MCF 10A (cell line): ENCODE measurements at regions of chr1 and their contacts with region 1.

Region 1: GRCh38 chr1:186738926-186739325 is 58.7 kb upstream of the PTGS2 start:
- DNase-seq: no peak
- H3K4me3 Mint-ChIP-seq: no peak overlapping the region
- H3K27ac Mint-ChIP-seq: no peak overlapping the region
- H3K4me1 Mint-ChIP-seq: peaks cover 7% of the 10 kb centered on the region
- H3K27me3 Mint-ChIP-seq: no peaks in the 10 kb centered on the region
- CTCF ChIP-seq: no peak

Region 2: DNA sequence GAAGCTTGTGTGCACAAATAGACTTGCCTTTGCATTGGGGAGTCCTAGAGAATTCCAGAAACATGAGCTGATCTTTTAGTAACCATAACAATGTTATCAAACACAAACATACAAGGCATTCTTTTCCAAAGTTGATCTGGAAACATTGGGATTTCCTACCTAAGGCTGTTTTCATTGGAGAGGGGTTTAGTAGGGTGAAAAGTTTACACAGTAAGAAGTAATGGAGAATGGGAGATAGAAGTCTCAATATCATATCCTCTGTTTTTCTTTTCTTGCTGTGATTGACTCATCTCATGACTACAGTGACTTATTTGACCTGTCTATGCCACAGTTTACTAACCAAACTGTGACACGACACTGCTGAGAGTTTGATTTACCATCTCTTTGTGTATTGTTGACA is 24.2 kb after region 1 on chr1:
- CTCF ChIA-PET with region 1: no interaction called
- POLR2A ChIA-PET with region 1: no interaction called
- intact Hi-C with region 1: no loop called
- DNase-seq: no peak
- H3K4me3 Mint-ChIP-seq: no peak overlapping the region
- H3K27ac Mint-ChIP-seq: no peak overlapping the region
- H3K4me1 Mint-ChIP-seq: no peaks in the 10 kb centered on the region
- H3K27me3 Mint-ChIP-seq: no peaks in the 10 kb centered on the region
- CTCF ChIP-seq: no peak

Region 3: GRCh38 chr1:186781730-186782129 is 42.8 kb after region 1 on chr1:
- CTCF ChIA-PET with region 1: no interaction called
- POLR2A ChIA-PET with region 1: no interaction called
- intact Hi-C with region 1: loop called (anchors 5 kb)
- DNase-seq: no peak
- H3K4me3 Mint-ChIP-seq: no peak overlapping the region
- H3K27ac Mint-ChIP-seq: no peak overlapping the region
- H3K4me1 Mint-ChIP-seq: no peaks in the 10 kb centered on the region
- H3K27me3 Mint-ChIP-seq: no peaks in the 10 kb centered on the region
- CTCF ChIP-seq: no peak

Region 4: DNA sequence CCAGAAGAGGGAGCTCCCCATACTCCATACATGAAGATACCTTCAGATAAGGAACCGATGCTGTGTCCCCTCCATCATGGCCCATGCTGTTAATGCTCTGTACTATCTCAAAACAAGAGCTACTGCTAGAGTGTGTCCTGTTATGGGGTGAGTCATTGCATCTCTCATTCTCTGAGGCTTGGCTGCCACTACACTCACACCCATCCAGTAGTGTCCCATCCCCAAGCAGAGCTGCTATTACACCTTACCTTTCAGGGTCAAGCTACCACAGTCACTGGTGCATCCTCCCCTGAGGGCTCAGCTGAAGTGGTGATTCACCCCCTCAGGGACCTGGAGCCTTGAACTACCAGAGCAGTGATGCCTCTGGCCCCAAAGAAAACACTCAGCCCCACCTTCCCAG is 288.3 kb after region 1 on chr1:
- CTCF ChIA-PET with region 1: no interaction called
- POLR2A ChIA-PET with region 1: no interaction called
- intact Hi-C with region 1: no loop called
- DNase-seq: peak; percentile 16
- H3K4me3 Mint-ChIP-seq: no peak overlapping the region
- H3K27ac Mint-ChIP-seq: no peak overlapping the region
- H3K4me1 Mint-ChIP-seq: no peaks in the 10 kb centered on the region
- H3K27me3 Mint-ChIP-seq: no peaks in the 10 kb centered on the region
- CTCF ChIP-seq: no peak